H1 (cell line): ENCODE measurements at regions of chr13 and their contacts with region 1.

Region 1: DNA sequence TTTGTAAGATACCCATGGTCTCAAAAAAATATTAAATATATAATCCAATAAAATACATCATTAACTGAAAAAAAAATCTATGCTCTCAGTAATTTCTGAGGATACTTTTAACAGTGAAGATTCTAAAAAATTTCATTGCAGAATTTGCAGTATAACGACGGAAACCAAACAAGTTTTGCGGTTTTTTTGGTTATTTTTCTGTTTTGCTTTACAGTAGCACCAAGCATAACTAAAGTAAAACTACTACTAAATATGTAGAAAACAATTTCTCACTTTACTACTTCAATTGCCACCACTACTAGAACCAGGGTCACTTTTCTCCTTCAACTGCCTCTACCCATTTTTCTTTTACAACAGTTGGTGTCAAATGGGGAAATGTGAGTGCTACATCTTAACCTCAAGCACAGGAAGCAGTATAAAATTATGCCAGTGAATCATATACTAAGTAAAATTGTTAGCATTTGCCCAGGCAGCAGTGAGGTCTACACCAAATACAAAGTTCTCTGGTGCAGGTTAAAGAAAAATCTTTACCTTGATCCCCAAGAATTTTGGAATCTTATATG is 24.1 kb downstream of the MICU2 start:
- DNase-seq: no peak
- H3K4me3 ChIP-seq: no peak overlapping the region
- H3K27ac ChIP-seq: no peak overlapping the region
- H3K4me1 ChIP-seq: peaks cover 0 to 7% (median 0%) of the 10 kb centered on the region in 4 experiments; a peak in 1 of 7 replicates
- H3K27me3 ChIP-seq: no peaks in the 10 kb centered on the region
- CTCF ChIP-seq: no peak
- EP300 ChIP-seq: no peak
- POLR2A ChIP-seq: no peak
- RAD21 ChIP-seq: no peak

Region 2: DNA sequence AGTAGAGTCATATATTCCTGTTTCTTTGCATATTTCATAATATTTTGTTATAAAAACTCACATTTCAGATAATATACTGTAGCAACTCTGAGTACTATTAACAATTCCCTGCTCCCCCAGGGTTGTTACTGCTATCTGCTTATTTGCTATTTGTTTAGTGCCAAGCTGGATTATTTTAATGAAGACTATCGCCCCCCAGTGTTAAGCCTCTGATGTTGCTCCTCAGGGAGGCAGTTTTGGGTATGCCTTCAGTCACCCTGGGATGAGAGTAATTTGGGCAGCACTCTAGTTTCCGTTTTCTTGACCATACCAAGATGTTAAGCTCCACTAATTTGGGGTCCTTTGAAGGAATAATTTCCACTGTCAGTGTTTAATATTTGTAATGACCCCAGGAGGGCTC is 21.8 kb before region 1 on chr13:
- CTCF ChIA-PET with region 1: interaction called, 10 read pairs
- POLR2A ChIA-PET with region 1: no interaction called
- DNase-seq: peak in 1 of 2 experiments; percentile 10
- H3K4me3 ChIP-seq: no peak overlapping the region
- H3K27ac ChIP-seq: no peak overlapping the region
- H3K4me1 ChIP-seq: no peaks in the 10 kb centered on the region; a peak in 1 of 7 replicates
- H3K27me3 ChIP-seq: no peaks in the 10 kb centered on the region
- CTCF ChIP-seq: peak; percentile 29 to 65 (median 41); a peak in 3 of 4 replicates
- EP300 ChIP-seq: no peak
- POLR2A ChIP-seq: no peak
- RAD21 ChIP-seq: peak; percentile 34 to 50; a peak in 3 of 4 replicates